ENCODE measurements at regions of chr20 and their contacts with region 1.

Region 1: DNA sequence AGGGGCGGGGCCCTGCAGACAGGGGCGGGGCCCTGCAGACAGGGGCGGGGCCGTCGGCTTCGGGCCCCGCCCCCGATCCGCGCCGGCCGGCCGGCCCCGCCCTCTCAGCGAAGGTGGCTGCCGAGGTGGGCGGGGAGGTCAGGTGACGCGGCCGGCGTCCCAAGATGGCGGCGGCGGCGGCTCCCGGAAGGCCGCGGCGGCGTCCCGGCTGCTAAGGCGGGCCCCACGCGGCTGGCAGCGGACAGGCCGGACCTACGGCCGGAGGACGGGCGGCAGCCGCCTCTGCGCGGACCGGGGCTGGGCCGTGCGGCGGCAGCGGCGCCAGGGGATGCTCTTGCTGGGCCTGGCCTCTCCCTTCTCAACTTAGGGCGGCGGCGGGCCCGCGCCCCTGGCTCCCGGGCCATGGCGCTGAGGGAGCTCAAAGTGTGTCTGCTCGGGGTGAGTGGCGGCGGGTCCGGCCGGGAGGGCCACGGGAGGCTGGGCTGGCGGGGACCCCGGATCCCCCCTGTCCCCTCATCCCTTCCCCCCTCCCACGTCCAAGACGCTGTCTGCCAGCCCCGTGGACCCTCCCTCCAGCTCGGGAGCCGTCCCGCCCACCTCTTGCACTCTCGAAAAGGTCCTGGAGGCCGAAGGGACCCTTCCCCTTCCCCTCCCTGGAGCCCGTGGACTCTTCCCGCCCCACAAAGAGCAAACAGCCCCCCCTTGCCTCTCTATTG is at the start of gene RAB22A:
- DNase-seq: peak; percentile 77 to 80
- H3K4me3 ChIP-seq: peak within 1 kb of the TSS; percentile 73 to 96 (median 88)
- H3K27ac ChIP-seq: peak within 1 kb of the TSS; percentile 76 to 81 (median 77)
- H3K4me1 ChIP-seq: peaks cover 14 to 19% of the 10 kb centered on the region in 2 donors
- H3K27me3 ChIP-seq: no peaks in the 10 kb centered on the region
- CTCF ChIP-seq: peak in 1 of 6 experiments; percentile 7
- POLR2A ChIP-seq: peak; percentile 86 to 87
- total RNA-seq, gene RAB22A: 26.6 to 33.6 (median 29.2) TPM

Region 2: DNA sequence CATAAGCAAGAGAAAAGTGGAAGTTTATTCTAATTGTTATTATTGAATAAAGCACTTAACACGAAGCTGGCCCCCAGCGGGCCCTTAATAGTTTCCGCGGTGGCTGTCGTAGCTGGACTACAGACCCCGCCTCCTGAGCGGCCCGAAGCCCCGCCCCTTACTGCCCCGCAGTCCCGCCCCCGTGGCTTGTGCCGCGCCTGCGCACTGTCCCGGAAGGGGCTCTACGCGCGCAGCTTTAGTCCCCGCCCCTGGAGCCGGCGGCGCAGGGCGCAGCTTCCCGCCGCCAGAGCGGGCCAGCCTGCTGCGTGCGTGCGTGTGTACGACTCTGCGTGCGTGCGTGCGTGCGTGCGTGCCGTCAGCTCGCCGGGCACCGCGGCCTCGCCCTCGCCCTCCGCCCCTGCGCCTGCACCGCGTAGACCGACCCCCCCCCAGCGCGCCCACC is 79.2 kb after region 1 on chr20 and contains the start of gene VAPB:
- intact Hi-C with region 1: loop called (anchors 10 kb)
- DNase-seq: peak; percentile 91 to 94
- H3K4me3 ChIP-seq: peak within 1 kb of the TSS; percentile 68 to 94 (median 94)
- H3K27ac ChIP-seq: peak within 1 kb of the TSS; percentile 71 to 93 (median 93)
- H3K4me1 ChIP-seq: peaks cover 29 to 41% of the 10 kb centered on the region in 2 donors
- H3K27me3 ChIP-seq: no peaks in the 10 kb centered on the region
- CTCF ChIP-seq: no peak
- POLR2A ChIP-seq: peak in 1 of 2 donors; percentile 90
- total RNA-seq, gene VAPB: 37.8 to 53.3 (median 39.2) TPM

Region 3: GRCh38 chr20:58458180-58459057 is 148.7 kb after region 1 on chr20:
- intact Hi-C with region 1: loop called (anchors 10 kb)
- DNase-seq: no peak
- H3K4me3 ChIP-seq: no peak overlapping the region
- H3K27ac ChIP-seq: no peak overlapping the region
- H3K4me1 ChIP-seq: peaks cover 9 to 10% of the 10 kb centered on the region in 2 donors
- H3K27me3 ChIP-seq: no peaks in the 10 kb centered on the region
- CTCF ChIP-seq: no peak
- POLR2A ChIP-seq: no peak

Region 4: DNA sequence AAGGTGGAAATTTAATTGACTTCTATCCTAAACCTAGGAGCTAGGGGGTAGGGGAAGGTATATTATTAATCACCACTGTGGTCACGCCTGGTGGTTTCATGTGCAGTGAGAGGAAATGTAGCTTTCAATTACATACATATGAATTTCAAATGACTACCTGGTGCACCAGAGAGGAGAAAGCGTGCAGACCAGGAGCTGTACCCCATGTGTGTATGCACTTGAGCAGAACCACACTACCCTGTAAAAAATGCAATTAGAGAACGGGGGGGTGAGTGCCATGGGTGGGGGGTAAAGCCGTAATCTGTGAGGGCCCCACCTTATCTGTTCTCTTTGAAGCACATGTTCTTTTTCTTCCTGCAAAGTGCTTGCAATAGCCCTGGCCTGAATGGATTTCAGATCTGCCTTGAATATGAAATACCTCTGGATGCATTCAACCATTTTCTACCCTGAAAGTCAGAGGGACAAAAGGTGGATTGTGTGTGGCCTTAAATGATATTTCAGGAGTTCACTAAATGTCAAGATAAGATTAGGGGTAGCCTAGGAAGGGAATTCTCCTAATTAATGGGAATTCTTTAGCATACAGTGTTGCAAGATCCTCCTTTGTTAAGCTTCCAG is 959.8 kb after region 1 on chr20:
- intact Hi-C with region 1: no loop called
- DNase-seq: no peak
- H3K4me3 ChIP-seq: no peak overlapping the region
- H3K27ac ChIP-seq: no peak overlapping the region
- H3K4me1 ChIP-seq: peaks cover 0 to 3% of the 10 kb centered on the region in 2 donors
- H3K27me3 ChIP-seq: no peaks in the 10 kb centered on the region
- CTCF ChIP-seq: no peak
- POLR2A ChIP-seq: no peak

Measured in thyroid gland (tissue), 4 donors.